Activated CD4-positive, alpha-beta memory T cell treated with anti-CD3 and anti-CD28 coated beads, Interleukin-2, amount 10 ng/mL, durations not matched to agents 7 days and 5 days (primary cell): ENCODE measurements at regions of chr6 and their contacts with region 1.

Region 1: DNA sequence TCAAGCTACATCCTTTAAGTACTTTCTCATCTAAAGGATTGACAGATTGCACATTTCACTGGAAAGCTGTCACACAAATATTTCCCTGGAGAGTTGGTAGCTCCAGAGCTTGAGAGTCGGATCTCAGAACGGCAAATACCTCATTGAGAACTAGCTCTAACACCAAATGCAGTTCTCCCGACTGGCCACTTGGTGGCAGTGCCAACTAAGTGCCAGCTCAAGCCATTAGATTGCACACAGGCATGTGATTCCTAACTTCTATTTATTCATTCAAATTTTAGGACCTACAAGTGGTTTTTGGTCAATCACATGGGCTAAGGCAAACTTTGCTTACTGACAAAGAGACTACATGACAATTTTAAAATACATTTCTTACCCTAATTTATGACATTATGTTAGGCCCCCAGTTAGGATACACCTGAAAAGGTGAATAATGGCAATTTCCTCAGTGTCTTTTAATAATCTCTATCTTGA is 7.9 kb upstream of the MCHR2 start:
- DNase-seq: peak; percentile 39
- H3K4me3 Mint-ChIP-seq: no peak overlapping the region
- H3K27ac Mint-ChIP-seq: no peak overlapping the region
- H3K4me1 Mint-ChIP-seq: no peaks in the 10 kb centered on the region
- H3K27me3 Mint-ChIP-seq: peaks cover 22% of the 10 kb centered on the region

Region 2: GRCh38 chr6:100099189-100100074 is 97.5 kb after region 1 on chr6:
- CTCF ChIA-PET with region 1: interaction called, 33 read pairs
- POLR2A ChIA-PET with region 1: no interaction called
- DNase-seq: no peak
- H3K4me3 Mint-ChIP-seq: no peak overlapping the region
- H3K27ac Mint-ChIP-seq: no peak overlapping the region
- H3K4me1 Mint-ChIP-seq: no peaks in the 10 kb centered on the region
- H3K27me3 Mint-ChIP-seq: peaks cover 22% of the 10 kb centered on the region